CD14-positive monocyte (primary cell): ENCODE measurements at regions of chr1 and their contacts with region 1.

Region 1: DNA sequence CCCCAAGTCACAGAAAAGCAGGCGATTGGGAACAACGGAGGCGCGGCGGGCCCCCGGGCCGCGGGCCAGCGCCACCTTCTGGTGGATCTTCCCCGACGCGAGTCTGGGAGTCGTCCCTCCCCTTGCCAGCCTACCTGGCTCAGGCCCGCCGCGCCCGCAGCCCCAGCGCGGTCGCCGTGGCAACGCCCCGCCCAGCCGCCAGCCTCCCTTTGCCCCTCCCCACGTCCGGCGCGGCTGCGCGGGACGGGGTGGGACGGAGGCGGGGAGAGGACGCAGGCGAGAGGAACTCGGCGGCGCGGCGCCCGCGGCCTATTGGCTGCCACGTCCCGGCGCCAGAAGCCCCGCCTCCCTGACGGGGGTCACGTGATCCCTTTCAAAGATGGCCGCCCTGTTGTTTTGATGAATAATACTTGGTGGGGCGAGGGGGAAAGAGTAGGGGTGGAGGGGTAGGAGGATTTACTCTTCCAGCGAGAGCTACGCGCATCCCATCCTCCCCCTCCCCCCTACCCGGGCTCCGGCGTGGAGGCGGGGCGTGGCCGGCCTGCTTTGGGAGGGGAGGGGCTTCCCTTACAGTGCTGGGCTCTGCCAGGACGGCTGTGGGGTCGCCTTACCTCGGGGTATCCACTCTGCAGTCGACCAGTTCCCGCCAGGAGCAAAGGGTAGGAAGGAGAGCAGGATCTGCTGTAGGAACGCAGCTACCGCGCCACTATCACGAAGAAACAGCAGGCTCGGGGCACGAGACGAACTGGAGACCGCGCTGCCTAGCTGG is at the start of gene UBE4B:
- DNase-seq: peak; percentile 98 to 99 (median 98)
- H3K4me3 ChIP-seq: peak within 1 kb of the TSS; percentile 70 to 100 (median 94)
- H3K4me3 Mint-ChIP-seq: peak within 1 kb of the TSS; percentile 95 to 96
- H3K27ac ChIP-seq: peak within 1 kb of the TSS; percentile 87 to 96
- H3K27ac Mint-ChIP-seq: peak within 1 kb of the TSS; percentile 91 to 96 (median 96)
- H3K4me1 ChIP-seq: peaks cover 30 to 45% of the 10 kb centered on the region in 2 donors
- H3K4me1 Mint-ChIP-seq: peaks cover 43% of the 10 kb centered on the region
- H3K27me3 ChIP-seq: no peaks in the 10 kb centered on the region
- H3K27me3 Mint-ChIP-seq: no peaks in the 10 kb centered on the region
- CTCF ChIP-seq: peak; percentile 71
- polyA plus RNA-seq, gene UBE4B: 6.0 to 34.6 (median 9.2) TPM

Region 2: GRCh38 chr1:9874959-9875635 is 157.7 kb before region 1 on chr1:
- intact Hi-C with region 1: loop called (anchors 5 to 10 kb)
- DNase-seq: peak; percentile 59 to 78 (median 74)
- H3K4me3 ChIP-seq: peak overlapping the region in 1 of 3 experiments; percentile 15
- H3K4me3 Mint-ChIP-seq: peak overlapping the region in 1 of 2 donors; percentile 41
- H3K27ac ChIP-seq: peak overlapping the region in 1 of 2 donors; percentile 26
- H3K27ac Mint-ChIP-seq: peak overlapping the region in 4 of 7 donors; percentile 63 to 84 (median 73)
- H3K4me1 ChIP-seq: peaks cover 5 to 6% of the 10 kb centered on the region in 2 donors
- H3K4me1 Mint-ChIP-seq: peaks cover 7% of the 10 kb centered on the region
- H3K27me3 ChIP-seq: no peaks in the 10 kb centered on the region
- H3K27me3 Mint-ChIP-seq: peaks cover 0 to 4% (median 0%) of the 10 kb centered on the region in 3 donors
- CTCF ChIP-seq: peak; percentile 90

Region 3: DNA sequence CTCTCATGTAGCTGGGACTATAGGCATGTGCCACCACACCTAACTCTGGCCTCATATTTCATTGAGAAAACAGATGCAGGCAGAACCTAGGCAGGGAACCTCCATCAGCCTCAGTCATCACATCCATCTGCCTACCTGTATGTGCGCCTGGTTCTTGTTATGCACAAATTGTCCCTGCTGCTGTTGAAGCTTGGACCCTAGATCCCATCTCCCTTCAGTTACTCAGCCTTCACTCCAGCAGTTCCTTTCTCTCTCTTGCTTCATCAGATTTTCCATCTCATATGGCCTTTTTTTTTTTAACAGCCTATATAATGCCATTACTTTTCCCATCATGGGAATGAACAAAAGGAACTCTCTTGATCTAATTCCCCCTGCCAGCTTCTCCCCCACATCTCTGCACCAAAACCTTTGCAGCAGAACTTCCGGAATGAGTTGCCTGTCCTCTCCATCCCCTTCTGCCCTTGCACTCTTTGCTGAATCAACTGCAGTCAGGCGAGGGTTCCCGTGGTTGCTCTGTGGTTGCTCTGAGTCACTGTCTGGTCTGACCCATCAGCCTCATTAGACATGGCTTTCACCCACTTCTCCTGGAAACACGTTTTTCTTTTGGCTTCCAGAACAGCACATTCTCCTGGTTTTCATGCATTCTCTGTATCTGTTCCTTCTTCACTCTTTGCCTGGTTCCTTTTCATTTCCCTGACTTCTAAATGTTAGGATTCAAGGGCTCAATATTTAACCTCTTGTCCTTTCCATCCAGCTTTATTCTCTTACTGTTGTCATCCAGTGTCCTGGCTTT is 41.5 kb after region 1 on chr1:
- intact Hi-C with region 1: no loop called
- DNase-seq: peak; percentile 71 to 85 (median 80)
- H3K4me3 ChIP-seq: no peak overlapping the region
- H3K4me3 Mint-ChIP-seq: peak overlapping the region; percentile 18 to 54
- H3K27ac ChIP-seq: peak overlapping the region in 1 of 2 donors; percentile 24
- H3K27ac Mint-ChIP-seq: peak overlapping the region; percentile 46 to 86 (median 72)
- H3K4me1 ChIP-seq: peaks cover 15 to 23% of the 10 kb centered on the region in 2 donors
- H3K4me1 Mint-ChIP-seq: peaks cover 32% of the 10 kb centered on the region
- H3K27me3 ChIP-seq: no peaks in the 10 kb centered on the region
- H3K27me3 Mint-ChIP-seq: peaks cover 0 to 2% (median 0%) of the 10 kb centered on the region in 3 donors
- CTCF ChIP-seq: no peak

Region 4: DNA sequence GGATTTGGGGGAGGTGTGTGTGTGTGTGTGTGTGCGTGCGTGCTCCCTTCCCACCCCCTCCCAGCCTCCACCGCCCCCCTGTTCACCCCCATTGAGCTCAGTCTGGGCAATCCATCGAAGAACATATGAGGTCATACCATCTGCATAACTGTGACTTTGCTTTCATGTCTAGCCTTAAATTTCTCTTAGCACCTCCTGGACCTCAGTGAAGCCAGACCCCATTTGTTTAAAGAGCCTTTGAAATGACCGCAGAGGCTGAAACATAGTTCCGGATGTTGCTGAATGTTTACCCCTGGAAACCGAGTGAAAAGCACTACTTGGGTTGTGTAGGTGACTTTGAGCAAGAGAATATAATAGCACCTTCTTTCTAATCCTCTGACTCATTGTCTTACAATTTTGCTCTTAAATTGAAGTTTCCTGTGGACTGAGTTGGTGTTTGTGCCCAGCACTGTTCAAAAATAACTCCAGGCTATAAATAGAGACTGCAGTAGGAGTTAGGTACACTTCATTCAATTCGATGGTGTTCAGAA is 75.4 kb after region 1 on chr1:
- intact Hi-C with region 1: no loop called
- DNase-seq: no peak
- H3K4me3 ChIP-seq: no peak overlapping the region
- H3K4me3 Mint-ChIP-seq: no peak overlapping the region
- H3K27ac ChIP-seq: no peak overlapping the region
- H3K27ac Mint-ChIP-seq: no peak overlapping the region
- H3K4me1 ChIP-seq: peaks cover 5 to 8% of the 10 kb centered on the region in 2 donors
- H3K4me1 Mint-ChIP-seq: peaks cover 10% of the 10 kb centered on the region
- H3K27me3 ChIP-seq: no peaks in the 10 kb centered on the region
- H3K27me3 Mint-ChIP-seq: peaks cover 0 to 1% (median 0%) of the 10 kb centered on the region in 3 donors
- CTCF ChIP-seq: no peak

Region 5: GRCh38 chr1:10195570-10195969 is 162.8 kb after region 1 on chr1:
- intact Hi-C with region 1: no loop called
- DNase-seq: no peak
- H3K4me3 ChIP-seq: no peak overlapping the region
- H3K4me3 Mint-ChIP-seq: no peak overlapping the region
- H3K27ac ChIP-seq: no peak overlapping the region
- H3K27ac Mint-ChIP-seq: no peak overlapping the region
- H3K4me1 ChIP-seq: no peaks in the 10 kb centered on the region
- H3K4me1 Mint-ChIP-seq: peaks cover 5% of the 10 kb centered on the region
- H3K27me3 ChIP-seq: no peaks in the 10 kb centered on the region
- H3K27me3 Mint-ChIP-seq: peaks cover 6 to 12% (median 11%) of the 10 kb centered on the region in 3 donors
- CTCF ChIP-seq: no peak